ENCODE measurements at regions of chr11 and their contacts with region 1.

Region 1: GRCh38 chr11:75445315-75445953 is 12.4 kb upstream of the KLHL35 start:
- DNase-seq: peak; percentile 64
- ATAC-seq: peak; percentile 83
- H3K4me3 ChIP-seq: peak overlapping the region in 1 of 2 experiments; percentile 15; a peak in 2 of 4 replicates
- H3K27ac ChIP-seq: no peak overlapping the region
- H3K4me1 ChIP-seq: no peaks in the 10 kb centered on the region
- H3K27me3 ChIP-seq: no peaks in the 10 kb centered on the region; the same call in 1 of the 2 replicates
- CTCF ChIP-seq: peak; percentile 97

Region 2: GRCh38 chr11:75532200-75533048 is 87.0 kb after region 1 on chr11:
- CTCF ChIA-PET with region 1: interaction called, 14 read pairs
- POLR2A ChIA-PET with region 1: no interaction called
- in situ Hi-C with region 1: no loop called
- intact Hi-C with region 1: loop called (anchors 1 kb)
- DNase-seq: peak; percentile 58
- ATAC-seq: peak; percentile 75
- H3K4me3 ChIP-seq: no peak overlapping the region; a peak in 1 of 4 replicates
- H3K27ac ChIP-seq: 0 out of 2 replicates have a peak overlapping the region, but pooled peaks have one; percentile 2
- H3K4me1 ChIP-seq: peaks cover 20% of the 10 kb centered on the region
- H3K27me3 ChIP-seq: no peaks in the 10 kb centered on the region
- CTCF ChIP-seq: peak; percentile 94

Measured in Panc1 (cell line).